ENCODE measurements at regions of chr7 and their contacts with region 1.

Region 1: GRCh38 chr7:139359366-139360209 is at the start of gene LUC7L2:
- DNase-seq: peak; percentile 96 to 100 (median 99)
- ATAC-seq: peak; percentile 91
- H3K4me3 ChIP-seq: peak within 1 kb of the TSS; percentile 80
- H3K4me3 Mint-ChIP-seq: peak within 1 kb of the TSS; percentile 93 to 100 (median 99)
- H3K27ac ChIP-seq: peak within 1 kb of the TSS; percentile 97
- H3K27ac Mint-ChIP-seq: peak within 1 kb of the TSS; percentile 95 to 100 (median 98)
- H3K4me1 ChIP-seq: peaks cover 10 to 27% of the 10 kb centered on the region in 2 donors
- H3K4me1 Mint-ChIP-seq: peaks cover 21 to 60% (median 45%) of the 10 kb centered on the region in 7 donors
- H3K27me3 ChIP-seq: no peaks in the 10 kb centered on the region
- H3K27me3 Mint-ChIP-seq: no peaks in the 10 kb centered on the region
- total RNA-seq, gene LUC7L2: 116 to 183 (median 150) TPM

Region 2: DNA sequence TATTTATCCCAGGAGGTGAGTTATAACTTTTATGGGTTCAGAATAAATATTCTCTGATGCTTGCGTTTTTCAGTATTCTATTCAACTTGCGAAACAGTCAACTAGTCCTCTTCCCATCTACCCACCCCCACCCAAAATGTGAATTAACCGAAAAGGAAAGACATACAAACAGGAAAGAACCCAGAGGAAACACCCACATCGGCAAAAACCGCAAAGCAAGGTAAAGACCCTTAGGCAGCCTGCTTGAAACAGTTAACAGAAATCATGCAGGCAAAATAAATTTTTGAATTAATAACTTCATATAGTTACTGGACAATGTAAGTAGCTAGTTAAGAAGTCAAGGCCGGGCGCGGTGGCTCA is 255.5 kb before region 1 on chr7:
- CTCF ChIA-PET with region 1: no interaction called
- POLR2A ChIA-PET with region 1: interaction called, 4 read pairs
- intact Hi-C with region 1: loop called (anchors 1 to 2 kb)
- DNase-seq: peak in 5 of 9 donors; percentile 41 to 55 (median 51)
- ATAC-seq: no peak
- H3K4me3 ChIP-seq: peak overlapping the region; percentile 80
- H3K4me3 Mint-ChIP-seq: peak overlapping the region; percentile 88 to 100 (median 96)
- H3K27ac ChIP-seq: peak overlapping the region; percentile 93
- H3K27ac Mint-ChIP-seq: peak overlapping the region; percentile 83 to 95 (median 92)
- H3K4me1 ChIP-seq: peaks cover 13 to 16% of the 10 kb centered on the region in 2 donors
- H3K4me1 Mint-ChIP-seq: peaks cover 22 to 46% (median 34%) of the 10 kb centered on the region in 7 donors
- H3K27me3 ChIP-seq: no peaks in the 10 kb centered on the region
- H3K27me3 Mint-ChIP-seq: peaks cover 0 to 2% (median 0%) of the 10 kb centered on the region in 5 donors

Region 3: DNA sequence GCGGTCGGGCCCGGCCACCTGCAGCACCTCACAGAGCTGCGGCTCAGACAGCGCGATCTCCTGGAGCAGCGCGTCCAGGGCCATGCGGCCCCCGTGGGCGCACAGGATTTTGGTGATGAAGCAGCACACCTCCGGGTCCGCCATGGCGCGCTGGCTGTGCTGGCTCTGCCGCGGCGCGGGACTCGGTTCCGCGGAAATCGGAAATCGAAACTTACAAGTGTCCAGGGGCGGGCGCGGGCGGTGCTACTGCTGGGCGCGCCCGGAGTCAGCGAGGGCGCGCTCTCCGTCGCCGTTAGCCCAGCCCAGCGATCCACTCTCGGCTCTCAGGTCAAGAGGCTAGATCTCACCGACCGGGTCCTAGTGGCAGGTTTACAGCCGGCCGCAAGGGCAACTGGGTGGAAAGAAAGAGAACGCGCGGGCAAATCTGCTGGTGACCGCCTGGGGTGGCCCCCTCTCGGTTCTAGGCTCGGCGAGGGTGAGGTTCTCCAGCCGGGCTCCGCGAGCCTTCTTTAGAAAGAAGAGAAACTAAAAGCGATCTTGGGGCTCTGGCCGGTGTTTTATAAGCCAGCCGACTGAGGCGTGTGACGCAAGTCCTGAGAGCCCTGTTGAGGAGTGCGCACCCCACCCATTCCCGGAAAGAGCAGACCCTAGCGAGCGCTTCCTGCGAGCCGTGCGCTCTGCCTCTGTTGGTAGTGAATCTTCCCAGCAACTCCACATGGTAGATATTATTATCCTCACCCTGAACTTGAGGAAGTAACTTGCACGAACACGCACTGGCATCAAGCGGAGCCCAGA is 250.2 kb before region 1 on chr7 and contains the start of gene ZC3HAV1:
- CTCF ChIA-PET with region 1: no interaction called
- POLR2A ChIA-PET with region 1: interaction called, 3 read pairs
- intact Hi-C with region 1: loop called (anchors 1 to 2 kb)
- DNase-seq: peak; percentile 68 to 94 (median 90)
- ATAC-seq: peak; percentile 91
- H3K4me3 ChIP-seq: peak within 1 kb of the TSS; percentile 80
- H3K4me3 Mint-ChIP-seq: peak within 1 kb of the TSS; percentile 92 to 100 (median 98)
- H3K27ac ChIP-seq: peak within 1 kb of the TSS; percentile 93
- H3K27ac Mint-ChIP-seq: peak within 1 kb of the TSS; percentile 96 to 100 (median 98)
- H3K4me1 ChIP-seq: peaks cover 13 to 22% of the 10 kb centered on the region in 2 donors
- H3K4me1 Mint-ChIP-seq: peaks cover 24 to 49% (median 42%) of the 10 kb centered on the region in 7 donors
- H3K27me3 ChIP-seq: no peaks in the 10 kb centered on the region
- H3K27me3 Mint-ChIP-seq: no peaks in the 10 kb centered on the region
- total RNA-seq, gene ZC3HAV1: 129 to 181 (median 152) TPM

Region 4: DNA sequence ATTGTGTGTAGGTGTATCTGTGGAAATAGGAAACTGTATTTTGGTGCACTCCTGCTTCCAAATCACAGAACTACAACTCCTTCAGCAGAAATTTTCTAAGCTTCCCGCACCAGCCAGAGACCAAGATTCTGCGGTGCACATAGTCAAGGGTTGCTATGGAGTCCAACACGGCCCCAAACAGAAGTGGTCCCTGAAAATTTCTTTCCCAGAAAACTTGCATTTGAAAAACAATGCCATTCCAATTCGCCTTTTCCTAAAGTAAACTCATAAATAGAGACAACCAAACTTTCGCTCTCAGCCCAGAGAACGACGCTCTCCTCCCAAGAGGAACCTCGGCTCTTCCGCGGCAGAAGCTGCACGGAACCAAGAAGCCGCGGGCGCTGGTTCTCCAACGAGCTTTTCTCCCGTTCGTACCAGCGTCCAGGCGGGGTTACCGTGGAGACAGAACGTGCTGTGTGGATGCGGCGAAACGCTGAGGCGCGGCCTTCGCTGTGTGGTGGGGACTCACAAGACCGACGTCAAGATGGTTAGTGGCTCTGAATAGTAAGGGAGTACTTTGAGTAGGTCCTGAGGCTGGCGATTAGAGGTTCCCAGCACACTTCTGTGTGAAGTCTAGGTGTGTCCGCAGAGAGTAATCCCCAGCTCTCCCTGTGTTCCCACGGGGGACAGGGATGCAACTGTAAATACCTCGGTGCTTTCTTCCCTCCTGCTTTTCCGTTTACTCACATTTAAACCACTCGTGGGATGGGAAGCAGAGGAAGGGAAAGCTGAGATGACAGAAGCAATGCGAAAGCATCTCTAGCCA is 226.1 kb before region 1 on chr7:
- CTCF ChIA-PET with region 1: no interaction called
- POLR2A ChIA-PET with region 1: interaction called, 6 read pairs
- intact Hi-C with region 1: loop called (anchors 1 kb)
- DNase-seq: peak; percentile 68 to 86 (median 83)
- ATAC-seq: peak; percentile 98
- H3K4me3 ChIP-seq: peak overlapping the region; percentile 86
- H3K4me3 Mint-ChIP-seq: peak overlapping the region; percentile 85 to 96 (median 90)
- H3K27ac ChIP-seq: peak overlapping the region; percentile 72
- H3K27ac Mint-ChIP-seq: peak overlapping the region; percentile 76 to 95 (median 85)
- H3K4me1 ChIP-seq: peaks cover 0 to 10% of the 10 kb centered on the region in 2 donors
- H3K4me1 Mint-ChIP-seq: peaks cover 11 to 33% (median 16%) of the 10 kb centered on the region in 7 donors
- H3K27me3 ChIP-seq: no peaks in the 10 kb centered on the region
- H3K27me3 Mint-ChIP-seq: peaks cover 0 to 5% (median 0%) of the 10 kb centered on the region in 5 donors

Region 5: DNA sequence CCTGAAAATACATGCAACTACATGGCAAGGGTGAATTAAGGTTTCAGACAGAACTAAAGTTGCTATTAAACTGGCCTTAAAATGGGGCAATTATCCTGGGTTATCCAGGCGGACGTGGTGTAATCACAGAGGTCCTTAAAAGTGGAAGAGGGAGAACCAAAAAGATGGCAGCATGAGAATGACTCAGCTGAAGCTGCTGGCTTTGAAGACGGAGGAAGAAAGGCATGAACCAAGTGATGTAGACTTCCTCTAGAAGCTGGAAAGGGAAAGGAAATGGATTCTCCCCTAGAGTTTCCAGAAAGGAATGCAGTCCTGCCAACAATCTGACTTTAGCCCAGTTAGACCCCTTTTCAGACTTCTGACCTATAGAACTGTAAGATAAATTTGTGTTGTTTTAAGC is 155.6 kb before region 1 on chr7:
- CTCF ChIA-PET with region 1: no interaction called
- POLR2A ChIA-PET with region 1: no interaction called
- intact Hi-C with region 1: no loop called
- DNase-seq: no peak
- ATAC-seq: no peak
- H3K4me3 ChIP-seq: no peak overlapping the region
- H3K4me3 Mint-ChIP-seq: no peak overlapping the region
- H3K27ac ChIP-seq: no peak overlapping the region
- H3K27ac Mint-ChIP-seq: no peak overlapping the region
- H3K4me1 ChIP-seq: no peaks in the 10 kb centered on the region
- H3K4me1 Mint-ChIP-seq: no peaks in the 10 kb centered on the region
- H3K27me3 ChIP-seq: no peaks in the 10 kb centered on the region
- H3K27me3 Mint-ChIP-seq: peaks cover 0 to 16% (median 9%) of the 10 kb centered on the region in 5 donors

Region 6: GRCh38 chr7:139370301-139370942 is 10.8 kb after region 1 on chr7:
- CTCF ChIA-PET with region 1: interaction called, 3 read pairs
- POLR2A ChIA-PET with region 1: interaction called, 8 read pairs
- intact Hi-C with region 1: loop called in 1 of 2 experiments (anchors 1 kb)
- DNase-seq: no peak
- ATAC-seq: no peak
- H3K4me3 ChIP-seq: no peak overlapping the region
- H3K4me3 Mint-ChIP-seq: peak overlapping the region in 8 of 10 donors; percentile 31 to 58 (median 39)
- H3K27ac ChIP-seq: no peak overlapping the region
- H3K27ac Mint-ChIP-seq: peak overlapping the region in 5 of 9 donors; percentile 9 to 83 (median 36)
- H3K4me1 ChIP-seq: peaks cover 14 to 35% of the 10 kb centered on the region in 2 donors
- H3K4me1 Mint-ChIP-seq: peaks cover 44 to 95% (median 83%) of the 10 kb centered on the region in 7 donors
- H3K27me3 ChIP-seq: no peaks in the 10 kb centered on the region
- H3K27me3 Mint-ChIP-seq: no peaks in the 10 kb centered on the region

Region 7: DNA sequence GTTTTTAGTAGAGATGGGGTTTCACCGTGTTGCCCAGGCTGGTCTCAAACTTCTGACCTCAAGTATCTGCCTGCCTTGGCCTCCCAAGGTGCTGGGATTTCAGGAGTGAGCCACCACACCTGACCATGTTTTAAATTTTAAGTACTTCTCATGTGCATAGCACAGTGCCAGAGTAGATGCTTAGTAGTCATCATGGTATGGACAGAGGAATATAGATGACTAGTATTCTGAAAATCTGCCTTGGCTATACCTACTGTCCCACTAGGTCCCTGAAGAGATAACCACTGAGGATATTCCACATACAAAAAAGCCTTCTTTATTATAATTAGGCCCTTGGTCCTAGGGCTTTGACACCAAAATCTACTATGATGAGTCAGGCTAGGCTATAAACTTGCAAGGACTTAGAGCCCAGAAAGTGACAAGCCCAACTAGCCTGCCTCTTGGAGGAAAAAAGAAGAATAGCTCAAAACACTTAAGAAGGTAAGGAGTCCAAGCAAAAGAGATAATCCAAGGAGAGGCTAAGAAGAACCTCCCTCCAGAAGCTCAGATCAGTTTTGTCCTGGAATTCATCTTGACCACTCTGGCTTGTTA is 34.1 kb after region 1 on chr7:
- CTCF ChIA-PET with region 1: no interaction called
- POLR2A ChIA-PET with region 1: interaction called, 10 read pairs
- intact Hi-C with region 1: loop called in 1 of 2 experiments (anchors 2 kb)
- DNase-seq: no peak
- ATAC-seq: no peak
- H3K4me3 ChIP-seq: no peak overlapping the region
- H3K4me3 Mint-ChIP-seq: peak overlapping the region in 9 of 10 donors; percentile 4 to 84 (median 53)
- H3K27ac ChIP-seq: peak overlapping the region; percentile 10
- H3K27ac Mint-ChIP-seq: peak overlapping the region in 8 of 9 donors; percentile 2 to 82 (median 56)
- H3K4me1 ChIP-seq: peaks cover 10 to 19% of the 10 kb centered on the region in 2 donors
- H3K4me1 Mint-ChIP-seq: peaks cover 19 to 77% (median 51%) of the 10 kb centered on the region in 7 donors
- H3K27me3 ChIP-seq: no peaks in the 10 kb centered on the region
- H3K27me3 Mint-ChIP-seq: no peaks in the 10 kb centered on the region

Region 8: DNA sequence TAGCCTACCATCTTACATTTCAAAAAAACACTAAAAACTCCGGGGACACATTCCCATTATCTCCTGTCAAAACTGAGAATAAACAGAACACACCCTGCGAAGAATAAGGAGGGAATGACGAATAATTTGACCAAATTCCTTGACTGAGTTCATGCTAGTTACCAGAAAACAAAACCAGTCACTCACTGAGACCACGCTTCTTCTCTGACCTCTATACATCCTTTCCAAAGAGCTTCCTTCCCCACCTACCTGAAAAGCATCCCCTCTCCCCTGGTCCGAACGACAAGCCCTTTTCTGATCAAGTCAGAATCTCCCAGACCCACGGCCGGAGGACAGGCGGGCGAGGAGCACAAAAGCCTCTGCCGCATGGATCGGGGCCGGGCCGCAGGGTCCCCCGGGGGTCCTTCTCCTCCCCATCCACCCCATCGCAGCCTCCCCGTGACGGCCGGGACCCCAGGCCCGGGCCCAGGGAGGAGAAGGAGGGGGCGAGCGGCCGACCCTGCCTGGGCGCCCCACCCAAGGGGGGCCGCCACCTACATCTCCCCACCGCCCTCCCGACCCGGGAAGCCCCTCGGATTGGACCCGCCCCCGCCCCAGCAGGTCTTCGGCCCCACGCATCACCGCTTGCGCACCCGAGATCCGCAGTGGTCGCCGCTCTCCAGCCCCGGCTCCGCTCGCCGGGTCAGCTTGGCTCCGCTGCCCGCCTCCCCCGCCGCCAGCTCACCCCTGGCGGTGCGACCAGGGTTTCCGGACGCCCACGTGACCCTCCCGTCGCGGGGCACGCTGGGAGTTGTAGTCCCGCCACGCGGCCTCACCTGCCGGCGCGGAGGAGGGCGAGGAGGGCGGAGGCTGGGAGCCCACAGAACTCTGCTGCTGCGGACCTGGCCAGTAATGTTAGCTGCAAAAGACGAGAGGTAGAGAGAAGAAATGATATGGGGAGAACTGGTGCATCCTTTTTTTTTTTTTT is 1038.5 kb after region 1 on chr7 and contains the start of gene SLC37A3:
- CTCF ChIA-PET with region 1: no interaction called
- POLR2A ChIA-PET with region 1: no interaction called
- intact Hi-C with region 1: loop called in 1 of 2 experiments (anchors 5 kb)
- DNase-seq: peak; percentile 74 to 93 (median 80)
- ATAC-seq: peak; percentile 97
- H3K4me3 ChIP-seq: peak within 1 kb of the TSS; percentile 67
- H3K4me3 Mint-ChIP-seq: peak within 1 kb of the TSS; percentile 79 to 95 (median 90)
- H3K27ac ChIP-seq: peak within 1 kb of the TSS; percentile 84
- H3K27ac Mint-ChIP-seq: peak within 1 kb of the TSS; percentile 14 to 92 (median 85)
- H3K4me1 ChIP-seq: peaks cover 0 to 15% of the 10 kb centered on the region in 2 donors
- H3K4me1 Mint-ChIP-seq: peaks cover 22 to 41% (median 31%) of the 10 kb centered on the region in 7 donors
- H3K27me3 ChIP-seq: no peaks in the 10 kb centered on the region
- H3K27me3 Mint-ChIP-seq: no peaks in the 10 kb centered on the region
- total RNA-seq, gene SLC37A3: 26.8 to 72.7 (median 39.4) TPM

Measured in naive thymus-derived CD4-positive, alpha-beta T cell (primary cell).